ENCODE measurements at regions of chr17 and their contacts with region 1.

Region 1: GRCh38 chr17:40018211-40019121 is 3.2 kb downstream of the CSF3 start:
- DNase-seq: no peak
- ATAC-seq: peak; percentile 14
- H3K4me3 ChIP-seq: no peak overlapping the region
- H3K27ac ChIP-seq: peak overlapping the region; percentile 64
- H3K4me1 ChIP-seq: peaks cover 33% of the 10 kb centered on the region
- H3K27me3 ChIP-seq: no peaks in the 10 kb centered on the region
- CTCF ChIP-seq: no peak
- POLR2A ChIP-seq: no peak
- RAD21 ChIP-seq: no peak

Region 2: DNA sequence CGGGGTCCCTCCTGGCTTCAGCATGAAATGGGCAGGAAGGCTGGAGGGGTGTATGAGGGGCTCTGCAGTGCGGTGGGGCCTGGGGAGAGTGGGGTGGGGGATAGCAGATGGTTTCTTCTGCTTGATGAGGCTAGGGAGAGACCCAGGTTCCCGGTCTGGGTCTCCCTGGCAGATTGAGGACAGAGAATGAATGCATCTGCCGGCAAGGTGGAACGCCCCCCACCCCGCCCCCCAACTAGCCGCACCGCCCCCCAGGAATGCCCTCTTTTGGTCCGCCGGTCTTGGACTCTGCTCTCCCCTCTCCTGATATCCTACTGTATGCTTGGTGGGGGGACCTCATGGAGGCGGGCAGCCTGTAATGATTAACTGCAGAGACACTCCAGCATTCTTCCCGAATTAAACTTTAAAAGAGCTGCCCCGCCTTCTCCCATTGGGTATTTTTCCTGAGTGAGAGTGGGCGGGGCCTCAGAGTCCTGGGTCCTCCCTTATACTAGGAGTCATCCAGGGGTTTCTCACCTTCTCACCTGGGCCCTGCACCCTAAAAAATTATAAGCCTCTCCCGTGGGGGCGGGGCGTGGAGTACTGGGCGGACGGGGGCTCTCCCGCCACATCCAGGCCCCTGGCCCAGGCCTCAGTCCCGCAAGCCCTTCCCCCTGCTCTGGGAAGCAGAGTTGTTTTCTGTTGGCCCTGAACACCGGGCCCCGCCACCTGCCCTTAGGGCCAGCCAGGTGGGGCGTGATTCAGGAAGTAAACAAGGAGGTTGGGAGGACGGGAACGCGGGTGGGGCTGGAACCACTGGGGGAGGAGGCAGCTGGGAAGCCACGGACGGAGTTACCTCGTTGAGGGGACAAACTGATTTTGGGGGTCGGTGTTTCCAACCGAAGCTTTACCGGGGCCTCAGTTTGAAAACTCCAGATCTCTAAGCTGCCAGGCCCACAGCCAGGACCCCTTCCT is 279.3 kb before region 1 on chr17:
- CTCF ChIA-PET with region 1: no interaction called
- POLR2A ChIA-PET with region 1: no interaction called
- dilution Hi-C with region 1: no loop called
- in situ Hi-C with region 1: no loop called
- intact Hi-C with region 1: no loop called
- DNase-seq: no peak
- ATAC-seq: peak; percentile 73
- H3K4me3 ChIP-seq: no peak overlapping the region
- H3K27ac ChIP-seq: no peak overlapping the region
- H3K4me1 ChIP-seq: peaks cover 16% of the 10 kb centered on the region; the same call in 1 of the 2 replicates
- H3K27me3 ChIP-seq: peaks cover 44% of the 10 kb centered on the region
- CTCF ChIP-seq: no peak
- POLR2A ChIP-seq: no peak
- RAD21 ChIP-seq: no peak

Region 3: DNA sequence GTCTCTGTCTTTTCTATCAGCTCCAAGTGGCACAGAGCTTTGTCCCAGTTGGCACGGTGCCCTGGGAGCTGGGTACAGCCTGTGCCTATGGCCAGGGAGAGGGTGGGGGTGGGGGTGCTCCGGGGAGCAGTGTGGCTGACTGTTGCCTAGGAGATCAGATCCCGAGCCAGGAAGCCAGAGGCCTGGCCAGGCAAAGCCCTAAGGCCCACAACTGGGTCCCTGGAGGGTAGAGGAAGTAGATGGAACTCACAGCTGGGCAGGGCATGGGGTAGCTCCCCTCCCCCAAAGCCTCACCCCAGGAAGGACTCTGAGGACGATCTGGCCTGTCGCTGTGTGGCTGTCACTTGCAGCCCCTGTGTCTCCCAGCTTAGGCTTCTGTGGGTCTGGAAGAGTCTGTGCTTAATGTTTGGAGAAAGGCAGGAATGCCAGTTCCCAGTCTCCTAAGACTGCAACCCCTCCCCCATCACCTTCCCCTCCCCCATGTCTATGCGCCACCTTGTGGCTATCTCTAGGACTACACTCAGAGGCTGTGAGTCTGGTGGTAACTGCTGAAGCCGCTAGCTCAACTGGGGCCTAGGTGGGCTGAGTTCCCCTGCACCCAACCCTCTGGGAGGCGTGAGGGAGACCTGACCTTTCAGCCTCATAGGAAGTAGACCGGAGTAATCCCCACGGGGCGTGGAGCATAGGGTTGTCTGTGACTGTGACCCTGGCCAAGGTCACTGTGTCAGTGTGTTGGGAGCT is 56.9 kb after region 1 on chr17:
- CTCF ChIA-PET with region 1: interaction called, 3 read pairs
- POLR2A ChIA-PET with region 1: no interaction called
- dilution Hi-C with region 1: no loop called
- in situ Hi-C with region 1: no loop called
- intact Hi-C with region 1: loop called (anchors 1 kb)
- DNase-seq: peak; percentile 48
- ATAC-seq: peak; percentile 85
- H3K4me3 ChIP-seq: no peak overlapping the region
- H3K27ac ChIP-seq: peak overlapping the region; percentile 24; the same call in 1 of the 2 replicates
- H3K4me1 ChIP-seq: peaks cover 31% of the 10 kb centered on the region
- H3K27me3 ChIP-seq: no peaks in the 10 kb centered on the region
- CTCF ChIP-seq: peak; percentile 85
- POLR2A ChIP-seq: no peak
- RAD21 ChIP-seq: peak; percentile 67

Region 4: GRCh38 chr17:40086150-40087044 is 67.9 kb after region 1 on chr17:
- CTCF ChIA-PET with region 1: interaction called, 3 read pairs
- POLR2A ChIA-PET with region 1: no interaction called
- dilution Hi-C with region 1: no loop called
- in situ Hi-C with region 1: no loop called
- intact Hi-C with region 1: loop called (anchors 1 kb)
- DNase-seq: no peak
- ATAC-seq: peak; percentile 83
- H3K4me3 ChIP-seq: no peak overlapping the region
- H3K27ac ChIP-seq: no peak overlapping the region
- H3K4me1 ChIP-seq: no peaks in the 10 kb centered on the region; the same call in 1 of the 2 replicates
- H3K27me3 ChIP-seq: no peaks in the 10 kb centered on the region
- CTCF ChIP-seq: peak; percentile 68
- POLR2A ChIP-seq: no peak
- RAD21 ChIP-seq: peak; percentile 80

Region 5: GRCh38 chr17:40168262-40168832 is 149.9 kb after region 1 on chr17:
- CTCF ChIA-PET with region 1: no interaction called
- POLR2A ChIA-PET with region 1: no interaction called
- dilution Hi-C with region 1: no loop called
- in situ Hi-C with region 1: no loop called
- intact Hi-C with region 1: loop called (anchors 5 kb)
- DNase-seq: peak; percentile 69
- ATAC-seq: peak; percentile 96
- H3K4me3 ChIP-seq: no peak overlapping the region
- H3K27ac ChIP-seq: no peak overlapping the region
- H3K4me1 ChIP-seq: peaks cover 6% of the 10 kb centered on the region
- H3K27me3 ChIP-seq: no peaks in the 10 kb centered on the region
- CTCF ChIP-seq: peak; percentile 76
- POLR2A ChIP-seq: no peak
- RAD21 ChIP-seq: peak; percentile 76

Measured in IMR-90 (cell line).